Psoas muscle (tissue), 8 donors: ENCODE measurements at regions of chr17 and their contacts with region 1.

Region 1: GRCh38 chr17:39651923-39652586 is 13.1 kb upstream of the TCAP start:
- DNase-seq: no peak
- ATAC-seq: no peak
- H3K4me3 ChIP-seq: no peak overlapping the region
- H3K27ac ChIP-seq: no peak overlapping the region
- H3K4me1 ChIP-seq: peaks cover 6% of the 10 kb centered on the region
- H3K27me3 ChIP-seq: no peaks in the 10 kb centered on the region
- CTCF ChIP-seq: no peak

Region 2: GRCh38 chr17:39235555-39236449 is 416.3 kb before region 1 on chr17:
- intact Hi-C with region 1: no loop called
- DNase-seq: no peak
- ATAC-seq: peak; percentile 55 to 78 (median 64)
- H3K4me3 ChIP-seq: no peak overlapping the region
- H3K27ac ChIP-seq: no peak overlapping the region
- H3K4me1 ChIP-seq: peaks cover 15% of the 10 kb centered on the region
- H3K27me3 ChIP-seq: peaks cover 0 to 4% (median 0%) of the 10 kb centered on the region in 3 donors
- CTCF ChIP-seq: peak; percentile 47

Region 3: DNA sequence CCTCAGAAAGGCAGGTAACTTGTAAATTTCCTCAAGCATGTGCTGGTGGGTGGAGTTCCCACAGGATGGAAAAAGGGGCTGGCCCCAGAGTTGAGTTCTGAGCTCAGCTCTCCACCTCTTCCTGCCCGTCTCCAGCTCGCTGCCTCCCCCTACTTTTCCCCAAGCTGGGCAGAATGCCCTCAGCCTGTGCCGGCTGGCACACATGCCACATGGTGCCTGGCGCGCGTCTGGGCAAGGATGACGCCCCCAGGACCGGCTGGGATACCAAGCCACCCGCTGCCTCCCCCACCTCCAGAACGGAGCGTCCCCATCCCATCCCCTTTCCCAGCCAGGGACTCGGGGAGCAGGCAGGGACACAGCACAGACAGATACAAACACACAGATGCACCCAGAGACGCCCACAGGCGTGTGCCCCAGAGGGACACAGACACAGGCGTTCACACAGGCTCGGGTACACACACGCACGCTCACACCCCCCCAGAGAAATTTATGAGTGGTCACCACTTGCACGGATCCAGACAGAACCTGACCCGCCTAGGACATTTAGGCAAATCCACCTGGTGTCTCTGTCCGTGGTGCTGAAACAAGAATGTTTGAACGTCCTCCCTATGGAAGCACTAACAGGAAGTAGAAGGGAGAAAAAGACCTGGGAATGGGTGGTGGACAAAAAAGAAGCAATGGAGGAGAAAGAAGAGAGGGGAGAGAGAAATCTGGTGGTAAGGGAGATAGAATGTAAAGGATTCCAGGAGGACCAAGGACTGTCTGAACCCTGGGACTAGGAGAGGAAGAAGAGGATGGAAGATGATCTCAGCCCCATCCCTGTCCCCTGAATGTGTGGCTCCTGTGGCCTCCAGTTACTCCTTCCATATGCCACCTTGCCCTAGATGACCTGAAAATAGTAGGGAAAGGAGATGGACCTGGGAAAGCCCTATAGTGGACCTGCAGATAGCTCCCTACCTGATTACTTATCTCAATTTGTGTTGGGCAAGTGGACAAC is 59.8 kb before region 1 on chr17:
- intact Hi-C with region 1: no loop called
- DNase-seq: no peak
- ATAC-seq: no peak
- H3K4me3 ChIP-seq: no peak overlapping the region
- H3K27ac ChIP-seq: no peak overlapping the region
- H3K4me1 ChIP-seq: no peaks in the 10 kb centered on the region
- H3K27me3 ChIP-seq: peaks cover 0 to 44% (median 13%) of the 10 kb centered on the region in 3 donors
- CTCF ChIP-seq: no peak

Region 4: GRCh38 chr17:39710002-39710964 is 58.2 kb after region 1 on chr17:
- intact Hi-C with region 1: loop called in 1 of 2 experiments (anchors 1 kb)
- DNase-seq: peak in 1 of 2 donors; percentile 49
- ATAC-seq: no peak
- H3K4me3 ChIP-seq: no peak overlapping the region
- H3K27ac ChIP-seq: no peak overlapping the region
- H3K4me1 ChIP-seq: peaks cover 8% of the 10 kb centered on the region
- H3K27me3 ChIP-seq: no peaks in the 10 kb centered on the region
- CTCF ChIP-seq: no peak